ENCODE measurements at regions of chr15 and their contacts with region 1.

Region 1: GRCh38 chr15:86743283-86743903 is 663.7 kb downstream of the AGBL1 start:
- DNase-seq: peak; percentile 64
- H3K4me3 ChIP-seq: no peak overlapping the region
- H3K27ac ChIP-seq: no peak overlapping the region
- H3K4me1 ChIP-seq: peaks cover 0 to 3% (median 1%) of the 10 kb centered on the region in 4 donors
- H3K27me3 ChIP-seq: no peaks in the 10 kb centered on the region
- CTCF ChIP-seq: peak; percentile 62 to 81 (median 73)
- EP300 ChIP-seq: no peak
- POLR2A ChIP-seq: no peak

Region 2: DNA sequence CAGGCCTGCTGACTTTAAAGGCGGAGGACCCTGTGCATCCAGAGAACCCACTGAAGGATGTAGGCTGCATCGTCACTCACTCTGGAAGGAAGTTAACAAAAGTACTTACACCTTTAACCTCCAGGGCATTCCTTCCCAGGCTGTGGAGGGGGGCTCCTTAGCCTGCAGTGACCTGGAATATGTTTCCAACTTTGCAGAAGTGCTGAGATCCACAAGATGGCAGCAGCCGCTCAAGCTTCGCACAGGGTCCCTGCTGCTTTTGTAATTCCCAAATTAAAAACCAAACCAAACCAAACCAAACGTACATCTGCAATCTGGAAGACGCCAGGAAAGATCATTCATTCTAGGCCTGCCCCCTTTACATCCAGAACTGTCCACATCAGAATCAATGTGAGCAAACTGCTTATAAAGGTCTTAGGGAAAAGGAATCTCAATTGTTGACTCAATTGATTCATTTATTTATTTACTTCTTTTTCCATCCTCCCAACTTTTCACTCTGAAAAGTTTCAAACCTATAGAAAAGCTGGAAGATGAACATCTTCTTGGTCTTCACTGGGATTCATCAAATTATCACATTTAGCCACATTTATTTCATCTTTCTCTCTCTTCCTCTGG is 878.2 kb before region 1 on chr15:
- in situ Hi-C with region 1: loop called in 2 of 4 experiments (anchors 10 to 25 kb)
- intact Hi-C with region 1: no loop called
- DNase-seq: peak; percentile 17
- H3K4me3 ChIP-seq: no peak overlapping the region
- H3K27ac ChIP-seq: no peak overlapping the region
- H3K4me1 ChIP-seq: no peaks in the 10 kb centered on the region
- H3K27me3 ChIP-seq: no peaks in the 10 kb centered on the region
- CTCF ChIP-seq: peak; percentile 20 to 45 (median 33)
- EP300 ChIP-seq: no peak
- POLR2A ChIP-seq: no peak

Measured in transverse colon (tissue), 4 donors.